ENCODE measurements at regions of chr11 and their contacts with region 1.

Region 1: DNA sequence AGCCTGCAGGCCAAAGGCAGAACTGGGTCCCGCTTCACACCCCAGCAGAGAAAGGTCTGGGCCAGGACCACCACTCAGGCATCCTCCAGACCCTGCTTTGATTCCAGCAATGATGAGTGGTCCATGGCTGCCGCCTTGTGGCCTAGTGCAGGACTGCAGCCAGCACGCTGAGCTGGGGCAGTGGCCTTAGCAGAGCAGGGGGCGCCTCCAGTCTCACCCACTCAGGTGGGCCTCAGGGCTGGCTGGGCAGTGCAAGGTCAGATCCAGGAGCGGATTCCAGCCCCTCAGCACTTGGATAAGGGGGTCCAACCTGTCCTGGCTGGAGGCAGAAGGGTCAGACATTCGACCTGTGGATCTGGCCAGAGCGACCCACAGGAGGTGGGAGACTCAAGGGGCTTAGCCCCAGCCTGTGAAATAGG is 9.6 kb upstream of the PDE2A start:
- DNase-seq: peak; percentile 72
- H3K27ac ChIP-seq: no peak overlapping the region
- CTCF ChIP-seq: peak; percentile 92

Region 2: DNA sequence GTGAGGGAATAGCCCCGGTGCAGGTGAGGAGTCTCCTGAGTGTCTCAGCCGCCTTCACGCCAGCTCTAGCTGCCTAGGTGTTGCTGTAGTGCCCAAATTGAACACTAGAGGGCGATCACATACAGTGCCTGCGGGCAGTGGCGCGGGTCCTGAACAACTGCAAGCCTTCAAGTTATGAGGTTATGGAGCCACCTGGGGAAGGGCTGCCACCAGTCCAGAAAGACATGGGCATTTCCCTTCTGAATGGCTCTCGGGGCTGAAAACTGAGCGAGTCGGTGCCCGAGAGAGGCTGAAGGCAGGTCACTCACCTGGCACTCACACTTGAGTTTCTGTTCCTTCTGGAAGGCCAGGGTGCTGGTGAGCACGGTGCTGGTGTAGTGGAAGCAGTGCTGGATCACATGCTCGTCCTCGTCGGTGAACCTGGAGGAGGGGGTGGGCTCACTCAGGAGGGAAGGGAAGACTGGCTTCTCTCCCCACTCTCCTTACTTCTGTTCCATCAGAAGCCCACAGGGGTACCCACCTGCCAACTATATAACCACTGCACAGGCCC is 98.0 kb before region 1 on chr11:
- CTCF ChIA-PET with region 1: interaction called, 10 read pairs
- POLR2A ChIA-PET with region 1: no interaction called
- DNase-seq: peak; percentile 70
- H3K27ac ChIP-seq: no peak overlapping the region
- CTCF ChIP-seq: peak; percentile 96

Region 3: DNA sequence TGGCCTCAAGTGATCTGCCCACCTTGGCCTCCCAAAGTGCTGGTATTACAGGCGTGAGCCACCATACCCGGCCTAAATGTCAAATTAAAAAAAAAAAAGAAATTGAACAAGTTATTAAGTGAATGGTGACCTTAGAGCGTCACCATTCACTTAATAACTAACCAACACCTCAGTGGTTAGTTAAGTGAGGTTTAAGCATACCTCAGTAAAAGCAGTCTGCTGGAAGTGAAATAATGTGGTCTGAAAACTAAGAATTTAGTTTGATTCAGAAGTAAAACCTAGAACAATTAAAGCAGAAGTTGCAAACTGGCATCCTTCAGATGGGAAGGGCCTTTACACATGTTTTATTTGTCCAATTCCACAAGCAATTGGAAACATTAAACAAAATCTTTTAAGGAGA is 386.9 kb after region 1 on chr11:
- CTCF ChIA-PET with region 1: no interaction called
- POLR2A ChIA-PET with region 1: no interaction called
- DNase-seq: no peak
- H3K27ac ChIP-seq: no peak overlapping the region
- CTCF ChIP-seq: no peak